ENCODE measurements at regions of chr17 and their contacts with region 1.

Region 1: GRCh38 chr17:19362277-19363113 is at the start of gene B9D1:
- DNase-seq: peak; percentile 94

Region 2: GRCh38 chr17:19418251-19418992 is 55.9 kb after region 1 on chr17:
- in situ Hi-C with region 1: loop called (anchors 10 kb)
- DNase-seq: peak; percentile 24

Region 3: DNA sequence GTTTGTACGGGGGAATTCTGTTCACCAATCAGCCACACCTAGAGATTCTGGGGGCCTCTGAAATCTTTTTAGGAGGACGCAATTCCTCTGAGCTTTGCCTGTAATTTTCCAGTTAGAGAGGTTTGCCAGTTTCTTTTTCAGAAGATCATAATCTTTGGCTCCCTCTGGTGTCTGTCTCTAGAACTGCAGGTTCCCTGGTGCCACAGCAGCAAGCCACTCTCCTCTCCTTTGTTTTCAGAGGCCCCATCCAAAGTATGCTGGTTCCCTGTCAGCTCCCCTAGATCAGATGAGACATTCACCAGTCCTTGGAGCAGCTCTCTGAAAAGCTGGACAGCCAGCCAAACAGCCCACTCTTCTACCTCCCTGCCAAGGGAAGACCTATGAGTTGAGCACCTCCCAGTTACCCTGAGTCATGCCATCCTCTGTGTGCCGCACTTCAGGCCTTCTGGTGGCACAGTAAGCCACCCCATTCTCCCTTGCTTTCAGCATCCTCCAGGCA is 84.6 kb after region 1 on chr17:
- in situ Hi-C with region 1: loop called (anchors 10 kb)
- DNase-seq: peak; percentile 84

Region 4: DNA sequence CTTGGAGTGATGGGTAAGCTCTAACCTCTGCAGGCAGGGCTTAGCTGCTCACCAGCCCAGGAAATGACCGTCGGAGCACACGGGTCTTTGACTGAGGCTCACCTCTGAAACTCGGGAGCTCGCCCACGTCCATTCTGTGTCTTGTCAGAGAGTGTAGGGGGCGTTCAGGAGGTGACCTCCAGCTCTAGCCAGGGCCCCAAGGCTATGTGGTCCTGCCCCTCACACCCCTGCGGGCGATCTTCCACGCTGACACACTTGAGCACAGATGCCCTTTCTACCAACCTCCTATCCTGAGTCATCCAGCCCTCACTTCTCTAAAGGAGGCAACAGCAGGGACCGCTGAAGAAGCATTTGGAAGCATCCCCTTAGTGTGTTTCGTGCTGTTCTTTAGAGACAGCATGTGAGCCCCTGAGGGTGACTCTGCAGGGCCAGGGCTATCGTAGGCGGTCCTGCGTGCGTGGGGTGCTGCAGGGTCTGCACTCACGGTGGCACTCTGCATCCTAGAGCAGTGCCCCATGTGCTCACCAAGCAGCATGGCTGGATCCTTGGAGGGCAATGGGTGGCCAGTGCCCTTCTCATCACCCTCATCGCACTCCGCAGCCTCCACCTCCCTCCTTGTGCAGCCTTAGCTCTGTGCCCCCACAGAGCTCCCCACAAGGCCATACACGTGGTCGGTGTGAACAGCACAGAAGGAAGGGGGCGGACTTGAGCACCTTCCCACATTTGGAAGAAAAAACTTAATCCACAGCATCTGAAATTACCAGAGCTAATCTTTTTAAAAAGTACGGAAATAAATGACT is 204.9 kb after region 1 on chr17:
- in situ Hi-C with region 1: no loop called
- DNase-seq: no peak

Region 5: GRCh38 chr17:19664136-19664820 is 301.8 kb after region 1 on chr17:
- in situ Hi-C with region 1: no loop called
- DNase-seq: no peak

Measured in KBM-7 (cell line).